ENCODE measurements at regions of chr16 and their contacts with region 1.

Region 1: GRCh38 chr16:83878838-83879237 is 20.1 kb upstream of the MLYCD start:
- DNase-seq: peak in 1 of 2 experiments; percentile 53
- H3K4me3 ChIP-seq: no peak overlapping the region
- H3K4me3 Mint-ChIP-seq: no peak overlapping the region
- H3K27ac Mint-ChIP-seq: no peak overlapping the region
- H3K4me1 ChIP-seq: no peaks in the 10 kb centered on the region
- H3K4me1 Mint-ChIP-seq: no peaks in the 10 kb centered on the region
- H3K27me3 ChIP-seq: no peaks in the 10 kb centered on the region
- H3K27me3 Mint-ChIP-seq: peaks cover 22% of the 10 kb centered on the region
- CTCF ChIP-seq: peak; percentile 56 to 69

Region 2: GRCh38 chr16:83826146-83826913 is 52.5 kb before region 1 on chr16:
- CTCF ChIA-PET with region 1: no interaction called
- POLR2A ChIA-PET with region 1: no interaction called
- intact Hi-C with region 1: loop called (anchors 1 kb)
- DNase-seq: peak; percentile 79 to 88
- H3K4me3 ChIP-seq: no peak overlapping the region
- H3K4me3 Mint-ChIP-seq: no peak overlapping the region
- H3K27ac Mint-ChIP-seq: no peak overlapping the region
- H3K4me1 ChIP-seq: no peaks in the 10 kb centered on the region
- H3K4me1 Mint-ChIP-seq: peaks cover 6% of the 10 kb centered on the region
- H3K27me3 ChIP-seq: no peaks in the 10 kb centered on the region
- H3K27me3 Mint-ChIP-seq: no peaks in the 10 kb centered on the region
- CTCF ChIP-seq: peak; percentile 96 to 98

Region 3: DNA sequence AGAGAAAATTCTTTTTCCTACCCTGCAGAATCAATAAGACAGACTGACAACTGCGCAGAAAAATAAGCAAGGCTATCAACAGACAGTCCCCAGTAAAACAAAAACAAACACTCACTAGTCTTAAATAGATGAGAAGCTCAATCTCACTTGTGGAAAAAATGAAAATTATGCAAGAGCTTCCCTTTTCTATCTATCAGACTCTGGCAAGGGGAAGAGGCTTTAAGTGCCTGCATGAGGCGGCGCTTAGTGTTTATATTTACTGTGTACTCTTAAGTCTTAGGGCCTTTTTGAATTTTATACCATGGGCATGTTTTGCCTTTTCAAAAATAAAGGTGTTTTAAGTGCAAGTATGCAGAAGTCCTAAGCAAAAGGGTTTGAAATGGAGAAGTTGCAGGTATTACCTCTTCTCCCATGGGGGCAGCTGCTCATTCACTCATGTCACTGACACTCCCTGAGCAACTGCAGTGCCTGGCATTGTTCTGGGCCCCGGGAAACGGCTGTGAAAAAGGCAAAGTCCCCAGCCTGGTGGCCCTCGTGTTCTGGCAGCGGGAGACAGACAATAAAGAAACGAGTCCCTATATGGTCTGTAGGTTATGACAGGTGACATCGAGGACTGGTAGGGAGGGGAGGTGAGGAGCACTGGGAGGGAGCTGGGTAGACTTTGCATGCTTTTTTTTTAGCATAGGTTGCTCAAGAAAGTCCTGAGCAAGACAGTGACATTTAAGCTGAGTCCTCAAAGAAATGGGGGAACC is 35.9 kb before region 1 on chr16:
- CTCF ChIA-PET with region 1: no interaction called
- POLR2A ChIA-PET with region 1: no interaction called
- intact Hi-C with region 1: no loop called
- DNase-seq: no peak
- H3K4me3 ChIP-seq: no peak overlapping the region
- H3K4me3 Mint-ChIP-seq: no peak overlapping the region
- H3K27ac Mint-ChIP-seq: no peak overlapping the region
- H3K4me1 ChIP-seq: no peaks in the 10 kb centered on the region
- H3K4me1 Mint-ChIP-seq: no peaks in the 10 kb centered on the region
- H3K27me3 ChIP-seq: no peaks in the 10 kb centered on the region
- H3K27me3 Mint-ChIP-seq: peaks cover 5% of the 10 kb centered on the region
- CTCF ChIP-seq: no peak

Region 4: GRCh38 chr16:83898463-83899271 is 19.8 kb after region 1 on chr16 and contains the start of gene MLYCD:
- CTCF ChIA-PET with region 1: no interaction called
- POLR2A ChIA-PET with region 1: no interaction called
- intact Hi-C with region 1: no loop called
- DNase-seq: peak; percentile 94
- H3K4me3 ChIP-seq: peak within 1 kb of the TSS; percentile 94
- H3K4me3 Mint-ChIP-seq: peak within 1 kb of the TSS; percentile 90
- H3K27ac Mint-ChIP-seq: peak within 1 kb of the TSS; percentile 71
- H3K4me1 ChIP-seq: 0 out of 2 replicates have a peak, but pooled peaks cover 12% of the 10 kb centered on the region
- H3K4me1 Mint-ChIP-seq: peaks cover 13% of the 10 kb centered on the region
- H3K27me3 ChIP-seq: no peaks in the 10 kb centered on the region
- H3K27me3 Mint-ChIP-seq: no peaks in the 10 kb centered on the region
- CTCF ChIP-seq: no peak
- total RNA-seq, gene MLYCD: 8.7 and 9.0 TPM in 2 replicates